Aorta (tissue), 5 donors: ENCODE measurements at regions of chr9 and their contacts with region 1.

Region 1: GRCh38 chr9:34522971-34523797 is at the start of gene ENHO:
- DNase-seq: peak; percentile 90 to 97
- ATAC-seq: peak; percentile 98
- H3K4me3 ChIP-seq: peak within 1 kb of the TSS in 1 of 2 donors; percentile 38
- H3K27ac ChIP-seq: no peak within 1 kb of the TSS
- H3K4me1 ChIP-seq: no peaks in the 10 kb centered on the region
- H3K27me3 ChIP-seq: no peaks in the 10 kb centered on the region
- total RNA-seq, gene ENHO: not detected

Region 2: GRCh38 chr9:34458013-34458958 is 64.9 kb before region 1 on chr9 and contains the starts of genes DNAI1 and FAM219A:
- intact Hi-C with region 1: loop called in 1 of 2 experiments (anchors 5 kb)
- DNase-seq: peak; percentile 99
- ATAC-seq: peak; percentile 98
- H3K4me3 ChIP-seq: peak within 1 kb of the TSS; percentile 88
- H3K27ac ChIP-seq: peak within 1 kb of the TSS in 1 of 2 donors; percentile 32
- H3K4me1 ChIP-seq: no peaks in the 10 kb centered on the region
- H3K27me3 ChIP-seq: no peaks in the 10 kb centered on the region
- total RNA-seq, gene DNAI1: not detected
- total RNA-seq, gene FAM219A: 43.9 to 48.0 TPM

Region 3: DNA sequence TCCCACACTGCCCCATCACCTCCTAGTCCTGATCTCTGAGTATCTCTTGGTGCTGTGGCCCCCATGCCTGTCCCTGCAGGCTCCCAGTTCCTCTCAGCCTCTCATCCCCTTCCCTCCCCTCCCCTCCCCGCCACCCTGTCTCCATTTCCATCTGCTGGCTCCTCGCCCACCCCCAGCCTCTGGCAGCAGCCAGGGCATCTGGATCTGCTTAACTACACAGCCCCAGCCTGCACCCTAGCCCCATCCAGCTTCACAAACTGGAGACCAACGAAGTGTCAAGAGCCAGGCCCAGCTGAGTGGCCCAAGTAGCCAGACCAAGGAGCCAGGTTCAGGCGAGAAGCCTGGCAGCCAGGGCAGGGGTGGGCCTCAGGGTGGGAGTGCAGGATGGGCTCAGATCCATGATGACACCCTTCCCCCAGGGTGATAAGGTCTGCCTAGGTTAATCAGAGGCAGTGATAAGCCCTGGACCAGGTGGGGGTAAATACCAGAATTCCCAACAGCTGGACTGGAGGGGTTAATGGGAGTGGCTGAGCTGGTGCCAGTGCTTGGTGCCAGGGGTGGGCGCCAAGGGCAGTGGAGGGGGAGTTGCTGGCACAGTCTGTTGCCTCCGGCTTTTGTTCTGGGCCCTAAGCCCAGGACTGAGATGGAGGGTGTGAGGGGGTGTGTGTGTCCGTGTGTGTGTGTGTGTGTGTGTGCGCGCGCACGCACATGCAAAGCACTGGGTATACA is 131.3 kb after region 1 on chr9:
- intact Hi-C with region 1: no loop called
- DNase-seq: peak; percentile 87 to 89
- ATAC-seq: peak; percentile 81
- H3K4me3 ChIP-seq: no peak overlapping the region
- H3K27ac ChIP-seq: peak overlapping the region; percentile 53 to 70
- H3K4me1 ChIP-seq: peaks cover 0 to 2% of the 10 kb centered on the region in 2 donors
- H3K27me3 ChIP-seq: no peaks in the 10 kb centered on the region